AG04449 (cell line): ENCODE measurements at regions of chr1 and their contacts with region 1.

Region 1: DNA sequence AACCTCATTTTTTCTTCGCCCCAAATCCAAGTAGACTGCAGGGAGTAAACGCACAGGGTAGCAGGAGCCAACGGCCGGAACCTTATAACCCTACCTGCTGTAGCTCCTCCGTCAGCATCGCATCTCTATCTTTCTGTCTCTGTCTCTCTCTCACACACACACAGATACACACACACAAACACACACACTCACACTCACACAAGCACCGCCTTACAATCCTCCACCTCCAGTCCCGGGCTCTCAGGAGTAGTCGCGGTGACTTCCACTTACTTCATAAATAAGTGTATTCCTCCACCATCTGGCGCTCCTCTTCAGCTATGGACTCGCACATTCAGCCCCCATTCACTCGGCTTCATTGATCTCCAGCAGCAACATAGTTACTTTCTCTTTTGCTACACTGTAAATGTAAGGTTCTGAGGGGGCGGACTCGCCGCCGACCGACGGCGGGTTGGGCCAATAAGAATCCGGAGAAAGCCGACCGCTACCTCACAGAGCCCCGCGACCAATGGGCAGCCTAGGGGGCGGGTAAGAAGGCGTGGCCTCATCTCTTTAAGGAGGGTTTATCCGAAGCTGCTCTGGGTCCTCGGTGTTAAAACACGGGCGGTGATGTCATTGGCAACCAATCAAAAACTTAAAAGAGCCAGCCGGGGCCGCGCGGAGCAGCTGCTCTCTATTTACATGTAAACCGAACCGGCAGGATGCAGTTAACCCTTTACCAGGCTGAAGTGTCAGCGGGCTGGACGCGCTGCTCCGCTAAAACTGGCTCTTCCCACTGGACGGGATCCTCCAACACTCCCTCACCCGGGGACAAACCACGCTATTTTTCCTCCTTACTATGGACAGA is at the start of gene DUSP10:
- DNase-seq: peak; percentile 99
- H3K4me3 ChIP-seq: peak within 1 kb of the TSS; percentile 92
- CTCF ChIP-seq: no peak

Region 2: GRCh38 chr1:221356693-221357092 is 385.2 kb before region 1 on chr1:
- CTCF ChIA-PET with region 1: no interaction called
- POLR2A ChIA-PET with region 1: no interaction called
- DNase-seq: no peak
- H3K4me3 ChIP-seq: no peak overlapping the region
- CTCF ChIP-seq: no peak

Region 3: GRCh38 chr1:221478050-221478949 is 263.6 kb before region 1 on chr1:
- CTCF ChIA-PET with region 1: interaction called, 27 read pairs
- POLR2A ChIA-PET with region 1: no interaction called
- DNase-seq: peak; percentile 63
- H3K4me3 ChIP-seq: no peak overlapping the region
- CTCF ChIP-seq: peak; percentile 96

Region 4: DNA sequence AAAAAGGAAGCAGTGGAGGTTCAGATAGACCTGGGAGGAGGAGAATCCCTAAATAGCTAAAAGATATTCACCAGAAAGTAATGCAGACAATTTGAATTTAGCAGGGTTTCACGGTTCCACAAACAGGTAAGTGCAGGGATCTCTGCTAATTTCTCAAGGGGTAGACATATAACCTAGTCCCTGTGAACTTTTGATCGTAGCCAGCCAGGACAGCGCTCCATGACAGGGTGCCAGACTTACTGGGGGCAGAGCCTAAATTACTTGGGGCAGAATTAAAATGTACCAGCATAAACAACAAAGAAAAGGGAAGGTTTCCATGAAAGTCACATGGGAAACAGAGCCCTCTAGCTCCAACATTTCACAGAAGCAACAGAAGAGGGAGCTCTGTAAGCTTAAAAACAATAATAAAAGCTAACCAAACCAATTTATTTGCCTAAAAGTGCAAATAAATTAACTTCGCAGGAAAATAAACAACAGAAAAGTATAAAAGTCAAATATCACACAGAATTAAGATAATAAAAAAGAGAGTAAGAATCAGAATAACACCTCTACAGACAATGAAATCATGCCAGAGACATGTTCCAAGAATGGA is 198.3 kb before region 1 on chr1:
- CTCF ChIA-PET with region 1: interaction called, 13 read pairs
- POLR2A ChIA-PET with region 1: no interaction called
- DNase-seq: no peak
- H3K4me3 ChIP-seq: no peak overlapping the region
- CTCF ChIP-seq: peak; percentile 24

Region 5: DNA sequence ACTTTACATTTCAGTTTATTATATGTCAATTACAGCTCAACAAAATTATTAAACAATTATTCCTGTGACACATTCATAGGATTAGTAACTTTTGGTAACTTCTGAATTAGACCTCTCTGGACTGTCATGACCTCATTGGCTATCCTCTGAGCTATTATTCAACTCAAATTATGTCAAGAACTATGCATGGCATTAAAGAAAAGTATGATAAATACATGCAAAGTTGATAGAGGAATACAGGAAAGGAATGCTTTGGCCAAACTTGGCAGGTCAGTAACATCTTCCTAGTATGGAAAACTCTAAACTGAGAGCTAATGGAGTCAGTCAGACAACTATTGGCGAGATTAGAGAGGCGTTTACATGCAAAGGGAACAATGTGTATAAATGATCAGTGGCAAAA is 158.5 kb before region 1 on chr1:
- CTCF ChIA-PET with region 1: no interaction called
- POLR2A ChIA-PET with region 1: no interaction called
- DNase-seq: peak; percentile 5
- H3K4me3 ChIP-seq: no peak overlapping the region
- CTCF ChIP-seq: no peak

Region 6: DNA sequence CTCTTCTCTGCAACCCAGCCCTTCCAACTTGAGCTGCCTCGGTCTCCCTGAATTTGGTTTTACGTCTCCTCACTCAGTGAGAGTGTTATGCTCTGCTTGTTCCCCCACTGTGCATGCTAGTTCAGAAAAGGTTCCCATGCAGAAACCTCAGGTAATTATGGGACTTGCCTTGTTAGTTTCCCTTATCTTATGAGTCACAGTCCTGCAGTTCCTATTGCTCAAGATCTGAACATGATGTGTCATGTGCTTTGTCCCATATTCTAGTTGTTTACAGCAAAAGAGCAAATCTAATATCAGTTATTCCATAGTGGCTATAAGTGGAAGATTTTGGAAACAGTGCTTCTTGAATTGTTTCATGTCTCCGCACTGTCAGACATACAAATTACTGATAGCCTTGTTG is 74.4 kb before region 1 on chr1:
- CTCF ChIA-PET with region 1: no interaction called
- POLR2A ChIA-PET with region 1: no interaction called
- DNase-seq: peak; percentile 46
- H3K4me3 ChIP-seq: no peak overlapping the region
- CTCF ChIP-seq: no peak

Region 7: GRCh38 chr1:221718381-221719277 is 23.3 kb before region 1 on chr1:
- CTCF ChIA-PET with region 1: interaction called, 4 read pairs
- POLR2A ChIA-PET with region 1: interaction called, 28 read pairs
- DNase-seq: peak; percentile 98
- H3K4me3 ChIP-seq: no peak overlapping the region
- CTCF ChIP-seq: no peak

Region 8: DNA sequence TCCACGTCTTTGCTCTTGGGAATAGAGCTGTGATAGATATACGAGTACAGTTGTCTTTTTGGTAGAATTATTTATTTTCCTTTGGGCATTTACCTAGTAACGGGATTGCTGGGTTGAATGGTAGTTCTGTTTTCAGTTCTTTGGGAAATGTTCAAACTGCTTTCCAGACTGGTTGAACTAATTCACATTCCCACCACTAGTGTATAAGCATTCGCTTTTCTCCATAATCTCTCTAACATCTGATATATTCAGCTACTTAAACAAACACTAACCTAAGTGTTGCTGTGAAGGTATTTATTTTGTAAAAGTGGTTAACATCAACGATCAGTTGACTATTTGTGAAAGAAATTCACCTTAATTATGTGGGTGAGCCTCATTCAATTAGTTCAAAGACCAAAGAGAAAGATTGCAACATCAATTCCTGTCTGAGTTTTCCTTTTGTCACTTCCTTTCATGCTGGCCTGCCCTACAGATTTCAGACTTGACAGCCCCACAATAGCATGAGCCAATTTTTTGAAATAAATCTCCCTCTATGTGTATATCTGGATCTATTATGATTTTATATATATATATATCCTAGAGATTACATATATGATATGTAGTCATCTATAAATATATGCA is 26.6 kb after region 1 on chr1:
- CTCF ChIA-PET with region 1: no interaction called
- POLR2A ChIA-PET with region 1: no interaction called
- DNase-seq: no peak
- H3K4me3 ChIP-seq: no peak overlapping the region
- CTCF ChIP-seq: no peak